A673 (cell line): ENCODE measurements at regions of chr2 and their contacts with region 1.

Region 1: DNA sequence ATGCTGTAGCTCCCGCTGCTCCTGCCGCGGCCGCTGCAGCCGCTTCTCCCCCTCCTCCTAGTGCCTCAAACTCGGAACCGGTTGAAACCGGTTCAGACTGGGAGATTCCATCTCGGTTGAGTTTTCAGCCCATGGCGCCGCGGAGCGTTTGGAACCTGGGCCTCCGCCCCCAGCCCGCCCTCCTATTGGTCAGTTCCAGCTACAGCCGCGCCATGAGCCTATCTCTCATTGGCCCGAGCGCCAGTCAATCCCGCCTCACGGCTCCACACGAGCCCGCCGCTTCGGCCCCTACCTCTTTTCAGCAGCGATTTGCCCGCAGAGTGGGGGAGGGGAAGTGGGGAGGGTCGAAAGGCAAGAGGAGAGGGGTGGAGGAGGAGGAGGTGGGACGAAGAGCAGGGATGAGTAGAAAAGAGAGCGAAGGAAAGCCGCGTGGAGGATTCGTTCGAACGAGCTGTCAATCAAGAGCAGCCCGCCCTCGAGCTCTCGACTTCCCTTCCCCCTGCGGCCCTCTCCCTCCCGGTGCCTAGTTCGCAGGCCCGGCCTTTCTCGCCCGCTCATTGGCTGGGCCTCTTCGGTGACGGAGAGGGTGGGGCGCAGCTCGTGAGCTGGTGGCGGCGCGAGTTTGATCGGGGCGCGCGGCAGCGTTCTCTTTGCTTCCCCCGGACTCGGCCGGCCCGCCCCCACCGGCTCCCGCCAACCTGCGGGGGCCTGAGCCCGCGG is at the start of gene XPO1:
- DNase-seq: peak; percentile 100
- H3K4me3 ChIP-seq: peak within 1 kb of the TSS; percentile 74
- H3K27ac ChIP-seq: peak within 1 kb of the TSS; percentile 92
- H3K4me1 ChIP-seq: peaks cover 23% of the 10 kb centered on the region
- H3K27me3 ChIP-seq: no peaks in the 10 kb centered on the region
- CTCF ChIP-seq: no peak
- total RNA-seq, gene XPO1: 233 and 247 TPM in 2 replicates

Region 2: DNA sequence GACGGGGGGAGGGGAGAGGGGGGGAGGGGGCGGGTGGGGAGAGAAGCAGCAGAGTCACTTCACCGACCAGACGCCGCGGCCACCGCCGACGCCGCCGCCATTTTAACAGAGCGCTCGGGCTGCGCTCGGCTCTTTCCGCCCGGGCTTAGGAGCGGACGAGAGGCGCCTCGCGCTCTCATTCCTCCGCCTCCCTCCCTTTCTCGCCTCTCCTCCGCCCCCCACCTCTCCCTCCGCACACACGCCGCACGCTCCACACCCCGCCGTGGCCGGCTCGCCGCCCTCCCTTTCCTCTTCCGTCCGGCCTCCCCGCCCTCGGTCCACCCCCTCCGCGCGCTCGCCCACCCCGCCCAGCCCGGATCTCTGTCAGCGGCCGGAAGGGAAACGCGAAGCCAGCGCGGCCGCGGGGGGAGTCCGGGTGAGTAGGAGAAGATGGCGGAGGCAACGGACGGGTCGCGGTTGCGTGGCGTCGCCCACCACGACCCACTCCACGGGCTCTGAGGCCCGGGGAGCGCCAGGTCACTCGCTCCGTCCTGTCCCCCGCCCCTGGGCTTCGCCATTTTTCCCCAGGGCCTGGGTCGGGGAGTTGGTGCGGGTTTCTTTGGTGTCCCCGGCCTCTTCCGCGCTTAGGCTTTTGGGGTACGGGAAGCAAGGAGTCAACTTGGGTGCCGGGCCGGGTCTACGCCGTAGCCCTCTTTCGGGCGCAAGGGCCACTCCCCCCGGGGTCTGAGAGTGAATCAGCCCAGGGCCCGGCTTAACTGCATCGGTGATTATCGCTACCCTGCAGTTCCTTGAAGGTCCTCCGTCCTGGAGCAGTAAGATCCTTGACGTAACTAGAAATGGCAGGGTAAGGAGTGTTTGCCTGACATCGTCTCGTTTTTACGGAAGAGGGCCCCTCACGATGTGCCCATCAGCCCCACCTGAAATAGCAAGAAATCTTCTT is 67.1 kb before region 1 on chr2 and contains the start of gene USP34:
- CTCF ChIA-PET with region 1: no interaction called
- POLR2A ChIA-PET with region 1: no interaction called
- intact Hi-C with region 1: loop called (anchors 2 kb)
- DNase-seq: peak; percentile 97
- H3K4me3 ChIP-seq: peak within 1 kb of the TSS; percentile 100
- H3K27ac ChIP-seq: peak within 1 kb of the TSS; percentile 99
- H3K4me1 ChIP-seq: no peaks in the 10 kb centered on the region
- H3K27me3 ChIP-seq: no peaks in the 10 kb centered on the region
- CTCF ChIP-seq: no peak
- total RNA-seq, gene USP34: 97.1 and 98.5 TPM in 2 replicates

Region 3: DNA sequence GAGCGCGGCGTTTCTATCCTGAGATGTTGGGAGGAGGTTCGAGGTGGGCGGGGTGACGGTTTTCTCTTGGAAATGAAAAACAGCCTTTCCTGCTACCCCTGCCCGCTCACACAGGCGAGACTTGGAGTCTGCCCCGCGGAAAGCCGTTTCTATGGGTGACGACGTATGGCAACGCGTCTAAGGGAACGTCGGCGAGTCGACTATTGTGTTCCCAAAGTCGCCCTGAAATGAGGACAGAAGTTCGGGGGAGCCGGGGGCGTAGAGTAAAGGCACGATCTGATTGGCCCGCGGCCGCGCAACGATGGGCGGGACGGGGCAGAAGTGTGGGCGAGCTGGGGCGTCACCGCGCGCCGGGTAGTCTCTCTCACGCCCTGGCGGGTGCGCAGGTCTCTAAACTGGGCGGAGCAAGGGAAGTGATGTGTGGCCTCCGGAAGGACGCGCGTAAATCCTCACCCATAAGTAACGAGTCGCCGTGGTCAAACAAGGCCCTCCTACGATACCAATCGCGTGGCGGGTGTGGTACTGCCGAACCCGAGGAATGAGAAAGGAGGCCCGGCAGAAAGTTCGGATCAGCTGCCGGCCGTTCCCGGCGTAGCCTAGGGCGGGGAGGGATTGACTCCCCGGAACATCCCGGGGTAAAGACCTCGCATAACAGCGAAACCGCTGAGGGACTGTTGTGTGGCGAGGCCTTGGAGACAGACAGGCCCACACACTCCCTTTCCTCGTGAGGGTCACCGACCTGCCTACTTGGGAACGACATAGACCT is 225.9 kb after region 1 on chr2:
- CTCF ChIA-PET with region 1: no interaction called
- POLR2A ChIA-PET with region 1: no interaction called
- intact Hi-C with region 1: loop called (anchors 2 kb)
- DNase-seq: peak; percentile 99
- H3K4me3 ChIP-seq: peak overlapping the region; percentile 75
- H3K27ac ChIP-seq: peak overlapping the region; percentile 99
- H3K4me1 ChIP-seq: no peaks in the 10 kb centered on the region
- H3K27me3 ChIP-seq: no peaks in the 10 kb centered on the region
- CTCF ChIP-seq: no peak

Region 4: DNA sequence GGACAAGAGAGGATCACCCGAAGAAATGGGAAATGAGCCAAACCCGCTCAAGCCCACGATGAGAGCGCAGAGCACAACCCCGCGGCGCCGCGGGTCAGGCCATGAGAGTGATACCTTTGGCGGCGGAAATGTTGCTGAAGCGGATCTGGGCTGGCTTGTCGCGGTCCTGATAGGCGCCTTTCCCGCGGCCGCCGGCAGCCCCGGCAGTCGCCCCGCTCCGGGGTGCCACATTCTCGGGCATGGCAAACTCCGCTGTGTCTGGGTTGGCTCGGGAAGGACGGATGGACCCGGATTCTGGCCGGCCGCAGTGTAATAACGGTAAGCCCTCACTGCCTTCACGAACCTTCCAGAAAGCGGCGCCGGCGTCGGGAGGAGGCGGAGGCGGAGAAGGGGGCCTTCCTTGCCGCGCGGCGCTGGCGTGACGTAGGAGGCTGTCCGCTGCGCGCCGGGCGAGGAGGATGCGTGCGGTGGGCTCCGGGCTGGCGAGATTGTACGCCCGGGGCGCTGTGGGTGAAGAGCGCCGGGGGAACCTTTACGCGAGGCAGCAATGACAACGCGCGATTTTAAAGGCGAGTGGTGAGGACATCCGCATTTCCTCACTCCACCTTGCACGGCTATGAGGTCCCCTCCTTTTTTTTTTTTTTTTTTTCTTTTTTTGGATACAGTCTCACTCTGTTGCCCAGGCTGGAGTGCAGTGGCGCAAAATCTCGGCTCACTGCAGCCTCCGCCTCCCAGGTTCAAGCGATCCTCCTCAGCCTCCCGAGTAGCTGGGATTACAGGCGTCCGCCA is 350.1 kb after region 1 on chr2 and contains the start of gene CCT4:
- CTCF ChIA-PET with region 1: no interaction called
- POLR2A ChIA-PET with region 1: no interaction called
- intact Hi-C with region 1: loop called (anchors 10 kb)
- DNase-seq: peak; percentile 93
- H3K4me3 ChIP-seq: peak within 1 kb of the TSS; percentile 87
- H3K27ac ChIP-seq: peak within 1 kb of the TSS; percentile 90
- H3K4me1 ChIP-seq: peaks cover 9% of the 10 kb centered on the region
- H3K27me3 ChIP-seq: no peaks in the 10 kb centered on the region
- CTCF ChIP-seq: no peak
- total RNA-seq, gene CCT4: 329 and 348 TPM in 2 replicates

Region 5: GRCh38 chr2:62099523-62100175 is 561.3 kb after region 1 on chr2:
- CTCF ChIA-PET with region 1: no interaction called
- POLR2A ChIA-PET with region 1: no interaction called
- intact Hi-C with region 1: no loop called
- DNase-seq: no peak
- H3K4me3 ChIP-seq: no peak overlapping the region
- H3K27ac ChIP-seq: no peak overlapping the region
- H3K4me1 ChIP-seq: no peaks in the 10 kb centered on the region
- H3K27me3 ChIP-seq: no peaks in the 10 kb centered on the region
- CTCF ChIP-seq: no peak